Natural killer cell (primary cell): ENCODE measurements at regions of chr12 and their contacts with region 1.

Region 1: DNA sequence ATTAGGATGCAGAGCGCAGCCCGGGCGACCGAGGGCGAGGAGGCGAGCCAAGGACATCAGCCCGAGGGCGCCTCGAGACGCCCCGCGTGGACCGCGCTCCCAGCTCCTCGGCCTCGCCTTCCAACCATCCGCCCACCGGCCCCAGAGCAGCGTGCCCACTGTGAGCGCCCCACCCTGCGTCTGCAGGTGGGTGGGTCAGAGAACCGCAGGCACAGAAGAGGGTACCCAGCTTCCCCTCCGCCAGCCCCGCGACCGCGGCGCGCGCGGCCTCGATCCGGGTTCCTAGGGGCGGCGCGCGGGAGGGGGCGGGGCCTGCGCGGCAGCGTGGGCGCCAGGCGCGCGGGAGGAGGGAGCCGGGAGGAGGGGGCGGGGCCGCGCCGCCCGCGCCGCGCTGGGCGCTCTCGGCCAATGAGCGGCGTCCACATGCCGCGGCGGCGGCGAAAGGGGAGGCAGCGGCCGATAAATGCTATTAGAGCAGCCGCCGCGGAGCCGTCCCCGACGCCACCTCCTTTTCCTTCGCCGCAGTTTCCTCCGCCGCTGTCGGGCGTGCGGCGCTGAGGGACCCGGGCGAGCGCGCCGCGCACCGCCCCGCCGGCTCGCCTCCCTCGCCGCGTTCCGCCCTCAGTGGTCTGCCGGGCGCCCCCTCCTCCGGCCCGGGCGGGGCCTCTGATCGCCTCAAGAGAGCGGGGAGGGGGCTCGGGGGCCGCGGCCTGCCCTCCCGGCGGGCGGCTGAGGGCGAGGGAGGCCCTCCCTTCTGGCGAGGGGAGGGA is at the start of gene ATP2A2:
- DNase-seq: peak; percentile 89 to 97
- ATAC-seq: peak; percentile 84 to 96 (median 86)
- H3K4me3 ChIP-seq: peak within 1 kb of the TSS; percentile 70
- H3K4me3 Mint-ChIP-seq: peak within 1 kb of the TSS; percentile 88
- H3K27ac ChIP-seq: peak within 1 kb of the TSS; percentile 67
- H3K27ac Mint-ChIP-seq: peak within 1 kb of the TSS; percentile 79 to 90
- H3K4me1 ChIP-seq: peaks cover 12% of the 10 kb centered on the region
- H3K4me1 Mint-ChIP-seq: peaks cover 44 to 49% of the 10 kb centered on the region in 2 donors
- H3K27me3 ChIP-seq: no peaks in the 10 kb centered on the region
- H3K27me3 Mint-ChIP-seq: no peaks in the 10 kb centered on the region
- CTCF ChIP-seq: no peak
- total RNA-seq, gene ATP2A2: 118 to 140 (median 123) TPM

Region 2: GRCh38 chr12:109962398-109962797 is 318.6 kb before region 1 on chr12:
- intact Hi-C with region 1: no loop called
- DNase-seq: no peak
- ATAC-seq: no peak
- H3K4me3 ChIP-seq: no peak overlapping the region
- H3K4me3 Mint-ChIP-seq: no peak overlapping the region
- H3K27ac ChIP-seq: no peak overlapping the region
- H3K27ac Mint-ChIP-seq: no peak overlapping the region
- H3K4me1 ChIP-seq: no peaks in the 10 kb centered on the region
- H3K4me1 Mint-ChIP-seq: peaks cover 5 to 6% of the 10 kb centered on the region in 2 donors
- H3K27me3 ChIP-seq: no peaks in the 10 kb centered on the region
- H3K27me3 Mint-ChIP-seq: no peaks in the 10 kb centered on the region
- CTCF ChIP-seq: no peak

Region 3: GRCh38 chr12:110124184-110124995 is 156.6 kb before region 1 on chr12 and contains the start of gene IFT81:
- intact Hi-C with region 1: loop called (anchors 2 kb)
- DNase-seq: peak; percentile 95 to 97
- ATAC-seq: peak; percentile 92 to 97 (median 95)
- H3K4me3 ChIP-seq: peak within 1 kb of the TSS; percentile 69
- H3K4me3 Mint-ChIP-seq: peak within 1 kb of the TSS; percentile 90
- H3K27ac ChIP-seq: peak within 1 kb of the TSS; percentile 39
- H3K27ac Mint-ChIP-seq: peak within 1 kb of the TSS; percentile 67 to 83
- H3K4me1 ChIP-seq: peaks cover 10% of the 10 kb centered on the region
- H3K4me1 Mint-ChIP-seq: peaks cover 0 to 5% of the 10 kb centered on the region in 2 donors
- H3K27me3 ChIP-seq: no peaks in the 10 kb centered on the region
- H3K27me3 Mint-ChIP-seq: peaks cover 0 to 12% of the 10 kb centered on the region in 2 donors
- CTCF ChIP-seq: no peak
- total RNA-seq, gene IFT81: 0.61 to 1.4 (median 0.80) TPM

Region 4: GRCh38 chr12:110501752-110502738 is 221.1 kb after region 1 on chr12 and contains the starts of genes RAD9B and VPS29:
- intact Hi-C with region 1: loop called (anchors 5 kb)
- DNase-seq: peak; percentile 99 to 100
- ATAC-seq: peak; percentile 93 to 98 (median 94)
- H3K4me3 ChIP-seq: peak within 1 kb of the TSS; percentile 97
- H3K4me3 Mint-ChIP-seq: peak within 1 kb of the TSS; percentile 99
- H3K27ac ChIP-seq: peak within 1 kb of the TSS; percentile 91
- H3K27ac Mint-ChIP-seq: peak within 1 kb of the TSS; percentile 98 to 100
- H3K4me1 ChIP-seq: peaks cover 20% of the 10 kb centered on the region
- H3K4me1 Mint-ChIP-seq: peaks cover 29 to 33% of the 10 kb centered on the region in 2 donors
- H3K27me3 ChIP-seq: no peaks in the 10 kb centered on the region
- H3K27me3 Mint-ChIP-seq: no peaks in the 10 kb centered on the region
- CTCF ChIP-seq: no peak
- total RNA-seq, gene RAD9B: 0.18 to 1.8 (median 0.91) TPM
- total RNA-seq, gene VPS29: 94.3 to 115 (median 99.6) TPM